ENCODE measurements at regions of chr1 and their contacts with region 1.

Region 1: GRCh38 chr1:226149806-226150205 is 36.7 kb downstream of the ACBD3 start:
- DNase-seq: no peak
- H3K4me3 ChIP-seq: no peak overlapping the region
- H3K27ac ChIP-seq: no peak overlapping the region
- H3K4me1 ChIP-seq: no peaks in the 10 kb centered on the region
- H3K27me3 ChIP-seq: no peaks in the 10 kb centered on the region
- CTCF ChIP-seq: peak in 1 of 3 experiments; percentile 3; a peak in 1 of 4 replicates
- EP300 ChIP-seq: no peak
- POLR2A ChIP-seq: no peak
- RAD21 ChIP-seq: no peak

Region 2: GRCh38 chr1:226135059-226135651 is 14.7 kb before region 1 on chr1:
- CTCF ChIA-PET with region 1: interaction called, 12 read pairs
- POLR2A ChIA-PET with region 1: interaction called, 6 read pairs
- DNase-seq: peak in 1 of 2 experiments; percentile 52
- H3K4me3 ChIP-seq: no peak overlapping the region
- H3K27ac ChIP-seq: no peak overlapping the region
- H3K4me1 ChIP-seq: peaks cover 3 to 11% (median 7%) of the 10 kb centered on the region in 4 experiments; a peak in 6 of 7 replicates
- H3K27me3 ChIP-seq: no peaks in the 10 kb centered on the region
- CTCF ChIP-seq: no peak
- EP300 ChIP-seq: no peak
- POLR2A ChIP-seq: no peak
- RAD21 ChIP-seq: no peak

Region 3: DNA sequence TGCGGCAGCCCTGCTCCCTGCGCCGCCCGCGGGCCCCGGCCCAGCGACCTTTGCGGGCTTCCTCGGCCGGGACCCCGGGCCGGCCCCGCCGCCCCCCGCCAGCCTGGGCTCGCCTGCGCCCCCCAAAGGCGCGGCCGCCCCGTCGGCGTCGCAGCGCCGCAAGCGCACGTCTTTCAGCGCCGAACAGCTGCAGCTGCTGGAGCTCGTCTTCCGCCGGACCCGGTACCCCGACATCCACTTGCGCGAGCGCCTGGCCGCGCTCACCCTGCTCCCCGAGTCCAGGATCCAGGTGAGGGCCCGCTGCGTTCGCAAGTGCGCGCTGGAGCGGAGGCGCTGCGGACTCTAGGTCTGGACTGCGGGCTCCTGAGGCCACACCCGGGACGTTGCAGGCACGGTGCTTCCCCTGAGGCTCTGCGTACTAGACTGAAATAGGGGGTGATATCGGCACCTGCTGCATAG is 74.0 kb after region 1 on chr1:
- CTCF ChIA-PET with region 1: no interaction called
- POLR2A ChIA-PET with region 1: no interaction called
- DNase-seq: peak in 1 of 2 experiments; percentile 82
- H3K4me3 ChIP-seq: peak overlapping the region; percentile 34 to 69 (median 60)
- H3K27ac ChIP-seq: no peak overlapping the region
- H3K4me1 ChIP-seq: peaks cover 0 to 7% (median 0%) of the 10 kb centered on the region in 4 experiments; a peak in 3 of 7 replicates
- H3K27me3 ChIP-seq: peaks cover 0 to 23% (median 18%) of the 10 kb centered on the region in 4 experiments; a peak in 6 of 7 replicates
- CTCF ChIP-seq: peak; percentile 23 to 41 (median 34); a peak in 3 of 4 replicates
- EP300 ChIP-seq: no peak
- POLR2A ChIP-seq: no peak
- RAD21 ChIP-seq: peak in 1 of 2 experiments; percentile 0; a peak in 1 of 4 replicates